CD14-positive monocyte (primary cell): ENCODE measurements at regions of chrX and their contacts with region 1.

Region 1: GRCh38 chrX:19887911-19888879 is 795 bp upstream of the SH3KBP1 start:
- DNase-seq: peak; percentile 60 to 74 (median 67)
- H3K4me3 ChIP-seq: peak overlapping the region; percentile 56 to 79 (median 57)
- H3K4me3 Mint-ChIP-seq: peak overlapping the region; percentile 84 to 88
- H3K27ac ChIP-seq: peak overlapping the region in 1 of 2 donors; percentile 55
- H3K27ac Mint-ChIP-seq: peak overlapping the region in 6 of 7 donors; percentile 35 to 85 (median 68)
- H3K4me1 ChIP-seq: peaks cover 35 to 42% of the 10 kb centered on the region in 2 donors
- H3K4me1 Mint-ChIP-seq: peaks cover 29% of the 10 kb centered on the region
- H3K27me3 ChIP-seq: no peaks in the 10 kb centered on the region
- H3K27me3 Mint-ChIP-seq: peaks cover 0 to 16% (median 1%) of the 10 kb centered on the region in 3 donors
- CTCF ChIP-seq: peak; percentile 45

Region 2: DNA sequence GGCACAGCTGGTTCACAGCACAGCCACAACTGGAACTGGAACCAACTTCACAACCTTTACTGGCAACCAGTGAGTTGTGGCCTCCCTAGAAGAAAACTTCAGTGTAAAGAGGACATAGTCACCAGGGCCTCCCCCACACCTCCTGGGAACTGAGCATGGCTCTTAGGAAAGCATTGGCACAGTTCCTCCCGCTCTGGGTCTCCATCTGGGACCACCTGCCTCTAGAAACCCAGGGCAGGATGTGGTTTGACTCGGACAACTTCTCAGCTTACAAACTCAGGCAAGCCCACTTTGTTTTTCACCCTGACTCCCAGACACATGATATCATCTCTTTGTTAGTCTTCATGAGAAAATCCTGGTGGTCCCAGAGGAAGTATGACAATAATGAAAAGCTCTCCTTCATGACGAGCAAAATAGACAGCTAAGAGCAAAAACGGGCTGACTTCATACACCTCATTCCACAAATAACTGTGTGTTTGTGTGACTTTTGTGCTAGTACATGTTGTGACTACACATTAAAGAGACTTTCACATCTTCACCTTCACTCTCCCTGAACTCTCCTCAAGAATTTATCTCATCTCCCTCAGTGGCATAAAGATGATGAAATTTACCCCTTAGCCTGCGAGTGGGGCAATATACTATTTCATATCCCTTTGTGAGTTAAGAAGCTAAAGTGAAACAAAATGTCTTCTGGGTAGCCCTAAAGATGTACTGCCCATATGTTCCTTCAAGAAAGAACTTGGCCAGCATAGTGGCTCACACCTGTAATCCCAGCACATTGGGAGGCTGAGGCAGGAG is 76.2 kb before region 1 on chrX:
- intact Hi-C with region 1: loop called in 1 of 2 experiments (anchors 5 kb)
- DNase-seq: peak in 2 of 3 donors; percentile 44
- H3K4me3 ChIP-seq: no peak overlapping the region
- H3K4me3 Mint-ChIP-seq: peak overlapping the region in 1 of 2 donors; percentile 31
- H3K27ac ChIP-seq: peak overlapping the region; percentile 55 to 66
- H3K27ac Mint-ChIP-seq: peak overlapping the region; percentile 69 to 93 (median 86)
- H3K4me1 ChIP-seq: peaks cover 53 to 54% of the 10 kb centered on the region in 2 donors
- H3K4me1 Mint-ChIP-seq: peaks cover 56% of the 10 kb centered on the region
- H3K27me3 ChIP-seq: no peaks in the 10 kb centered on the region
- H3K27me3 Mint-ChIP-seq: peaks cover 0 to 2% (median 0%) of the 10 kb centered on the region in 3 donors
- CTCF ChIP-seq: no peak

Region 3: GRCh38 chrX:19846995-19847790 is 41.0 kb before region 1 on chrX:
- intact Hi-C with region 1: loop called (anchors 5 kb)
- DNase-seq: peak; percentile 71 to 84 (median 78)
- H3K4me3 ChIP-seq: peak overlapping the region in 1 of 3 experiments; percentile 0
- H3K4me3 Mint-ChIP-seq: peak overlapping the region; percentile 34 to 71
- H3K27ac ChIP-seq: peak overlapping the region; percentile 42 to 71
- H3K27ac Mint-ChIP-seq: peak overlapping the region; percentile 83 to 96 (median 87)
- H3K4me1 ChIP-seq: peaks cover 49 to 51% of the 10 kb centered on the region in 2 donors
- H3K4me1 Mint-ChIP-seq: peaks cover 56% of the 10 kb centered on the region
- H3K27me3 ChIP-seq: no peaks in the 10 kb centered on the region
- H3K27me3 Mint-ChIP-seq: peaks cover 0 to 7% (median 0%) of the 10 kb centered on the region in 3 donors
- CTCF ChIP-seq: no peak

Region 4: GRCh38 chrX:20181598-20182329 is 293.6 kb after region 1 on chrX:
- intact Hi-C with region 1: no loop called
- DNase-seq: no peak
- H3K4me3 ChIP-seq: no peak overlapping the region
- H3K4me3 Mint-ChIP-seq: no peak overlapping the region
- H3K27ac ChIP-seq: peak overlapping the region in 1 of 2 donors; percentile 8
- H3K27ac Mint-ChIP-seq: no peak overlapping the region
- H3K4me1 ChIP-seq: no peaks in the 10 kb centered on the region
- H3K4me1 Mint-ChIP-seq: peaks cover 1% of the 10 kb centered on the region
- H3K27me3 ChIP-seq: peaks cover 0 to 14% of the 10 kb centered on the region in 2 donors
- H3K27me3 Mint-ChIP-seq: peaks cover 0 to 17% (median 1%) of the 10 kb centered on the region in 3 donors
- CTCF ChIP-seq: no peak